ENCODE measurements at regions of chr10 and their contacts with region 1.

Region 1: DNA sequence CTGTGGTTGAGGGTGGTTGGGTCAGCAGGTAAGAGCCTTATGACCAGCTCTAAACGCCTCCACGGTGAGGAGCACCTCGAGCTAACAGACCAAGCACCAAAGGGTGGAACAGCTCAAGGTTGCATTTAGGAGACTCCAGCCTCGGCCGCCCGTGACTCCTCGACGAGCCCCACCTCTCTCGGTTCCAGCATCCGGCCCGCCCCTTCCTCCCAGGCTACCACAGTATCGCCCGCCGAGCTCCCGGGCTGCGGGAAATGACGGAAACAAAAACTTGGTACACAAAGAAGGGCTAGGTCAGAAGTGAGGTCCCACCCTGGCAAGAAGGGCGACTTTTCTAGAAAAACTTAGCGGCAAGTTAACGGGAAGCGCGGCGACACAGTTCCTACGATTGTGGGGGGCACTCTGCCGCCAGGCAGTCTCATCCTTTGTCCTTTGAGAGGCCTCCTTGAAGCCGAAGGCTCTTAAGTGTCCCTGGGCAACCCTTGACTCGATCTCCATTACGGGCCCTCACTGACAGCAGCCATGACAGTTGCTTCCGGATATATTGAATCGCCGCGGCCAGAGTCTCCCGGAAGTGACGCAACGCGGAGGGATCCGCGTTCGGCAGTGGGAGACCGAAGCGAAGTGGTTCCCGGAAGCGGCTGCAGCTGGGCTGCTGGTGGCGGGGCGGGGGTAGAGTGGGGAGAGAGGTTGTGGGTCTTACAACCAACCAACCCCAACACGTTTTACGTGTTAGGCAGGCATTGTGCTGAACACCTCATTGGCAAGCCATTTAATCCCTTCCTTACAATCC is 40.2 kb upstream of the ZNF518A start:
- DNase-seq: peak; percentile 95
- H3K4me3 Mint-ChIP-seq: peak overlapping the region; percentile 95
- H3K27ac Mint-ChIP-seq: peak overlapping the region; percentile 99
- H3K4me1 Mint-ChIP-seq: peaks cover 12% of the 10 kb centered on the region
- H3K27me3 Mint-ChIP-seq: peaks cover 15% of the 10 kb centered on the region

Region 2: DNA sequence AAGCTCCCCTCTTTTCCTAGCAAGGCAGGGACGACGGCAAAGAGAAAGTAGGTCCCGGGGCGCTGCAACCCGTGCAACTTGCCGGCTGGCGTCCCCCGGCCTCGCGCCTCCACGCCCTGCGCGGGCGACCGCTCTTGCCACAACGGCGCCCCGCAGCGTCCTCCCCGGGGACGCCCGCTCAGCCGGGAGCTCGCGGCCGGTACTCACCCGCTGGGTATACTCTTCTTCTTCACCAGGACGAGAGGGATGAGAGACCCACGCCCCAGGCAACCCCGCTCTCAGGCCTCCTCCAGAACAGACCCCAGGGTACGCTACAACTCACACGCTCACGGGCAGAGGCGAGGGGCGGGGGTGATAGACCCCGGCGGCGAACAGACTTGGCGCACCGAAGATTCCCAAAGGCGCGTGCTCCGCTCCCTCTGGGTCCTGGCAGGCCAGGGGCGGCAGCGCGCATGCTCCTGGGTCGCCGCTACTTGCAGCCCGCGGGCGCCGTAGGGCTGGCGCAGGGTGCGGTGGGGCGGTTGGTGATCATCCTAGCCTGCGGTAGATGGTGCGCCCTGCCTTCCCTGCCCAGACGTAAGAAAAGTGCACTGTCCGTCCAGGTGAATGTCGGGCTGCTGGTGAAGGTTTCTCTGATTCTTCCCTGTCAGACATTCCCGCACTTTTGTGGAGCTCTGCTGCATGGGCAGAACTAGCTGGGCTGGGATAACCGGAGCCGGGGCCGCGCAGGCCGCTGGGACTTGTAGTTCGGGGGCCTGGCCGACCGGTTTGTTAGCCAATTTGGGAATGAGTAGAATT is 182.2 kb before region 1 on chr10 and contains the start of gene CC2D2B:
- CTCF ChIA-PET with region 1: interaction called, 4 read pairs
- POLR2A ChIA-PET with region 1: no interaction called
- intact Hi-C with region 1: loop called (anchors 1 kb)
- DNase-seq: peak; percentile 75
- H3K4me3 Mint-ChIP-seq: peak within 1 kb of the TSS; percentile 92
- H3K27ac Mint-ChIP-seq: peak within 1 kb of the TSS; percentile 89
- H3K4me1 Mint-ChIP-seq: peaks cover 12% of the 10 kb centered on the region
- H3K27me3 Mint-ChIP-seq: peaks cover 2% of the 10 kb centered on the region
- total RNA-seq, gene CC2D2B: 0.15 TPM in 1 of 2 experiments, not detected in the other

Region 3: GRCh38 chr10:95963226-95963990 is 126.5 kb before region 1 on chr10:
- CTCF ChIA-PET with region 1: no interaction called
- POLR2A ChIA-PET with region 1: no interaction called
- intact Hi-C with region 1: no loop called
- DNase-seq: no peak
- H3K4me3 Mint-ChIP-seq: no peak overlapping the region
- H3K27ac Mint-ChIP-seq: peak overlapping the region; percentile 67
- H3K4me1 Mint-ChIP-seq: peaks cover 19% of the 10 kb centered on the region
- H3K27me3 Mint-ChIP-seq: no peaks in the 10 kb centered on the region

Region 4: DNA sequence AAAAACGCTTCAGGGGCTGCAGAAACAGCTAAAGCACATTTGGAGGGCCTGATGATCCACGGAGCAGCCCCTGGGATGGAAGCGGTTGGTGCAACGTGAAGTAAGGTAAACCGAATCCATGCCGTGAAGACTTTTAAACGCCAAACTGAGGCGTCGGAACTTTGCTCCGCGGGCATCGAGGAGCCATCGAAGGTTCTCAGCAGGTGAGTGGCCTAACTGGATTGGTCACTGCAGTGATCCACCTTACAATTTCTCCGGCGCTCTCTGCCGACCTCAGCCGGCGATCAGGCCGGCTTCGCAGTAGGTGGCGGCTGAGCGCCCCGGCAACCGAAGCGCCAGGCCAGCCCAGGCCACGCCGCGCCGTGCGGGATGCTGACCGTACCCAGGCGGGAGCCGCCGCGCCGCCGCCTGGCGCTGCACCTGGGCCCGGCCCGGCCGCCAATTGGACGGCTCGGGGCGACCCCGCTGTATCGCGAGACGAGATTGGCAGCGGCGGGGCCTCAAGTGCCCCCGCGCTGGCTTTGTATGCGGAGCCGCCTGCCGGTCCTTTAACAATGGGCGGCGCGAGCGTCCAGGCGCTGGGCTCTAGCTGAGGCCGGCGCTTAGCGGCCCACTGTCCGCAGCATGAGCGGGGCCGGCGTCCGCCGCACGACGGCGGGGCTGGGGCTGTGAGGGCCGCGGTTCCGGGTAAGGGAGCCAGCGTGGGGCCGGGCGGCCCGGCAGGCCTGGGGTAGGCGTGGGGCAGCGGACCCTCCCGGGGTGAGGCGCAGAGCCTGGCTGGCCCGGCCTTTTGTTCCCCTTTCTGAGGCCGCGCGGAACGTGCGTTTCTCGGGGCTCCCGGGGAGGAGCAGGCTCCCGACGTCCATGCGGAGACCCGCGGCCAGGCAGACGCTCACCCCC is 46.6 kb before region 1 on chr10 and contains the start of gene CCNJ:
- CTCF ChIA-PET with region 1: interaction called, 3 read pairs
- POLR2A ChIA-PET with region 1: interaction called, 5 read pairs
- intact Hi-C with region 1: loop called (anchors 1 kb)
- DNase-seq: peak; percentile 88
- H3K4me3 Mint-ChIP-seq: peak within 1 kb of the TSS; percentile 90
- H3K27ac Mint-ChIP-seq: peak within 1 kb of the TSS; percentile 59
- H3K4me1 Mint-ChIP-seq: peaks cover 42% of the 10 kb centered on the region
- H3K27me3 Mint-ChIP-seq: peaks cover 5% of the 10 kb centered on the region
- total RNA-seq, gene CCNJ: 4.3 to 4.4 TPM

Region 5: DNA sequence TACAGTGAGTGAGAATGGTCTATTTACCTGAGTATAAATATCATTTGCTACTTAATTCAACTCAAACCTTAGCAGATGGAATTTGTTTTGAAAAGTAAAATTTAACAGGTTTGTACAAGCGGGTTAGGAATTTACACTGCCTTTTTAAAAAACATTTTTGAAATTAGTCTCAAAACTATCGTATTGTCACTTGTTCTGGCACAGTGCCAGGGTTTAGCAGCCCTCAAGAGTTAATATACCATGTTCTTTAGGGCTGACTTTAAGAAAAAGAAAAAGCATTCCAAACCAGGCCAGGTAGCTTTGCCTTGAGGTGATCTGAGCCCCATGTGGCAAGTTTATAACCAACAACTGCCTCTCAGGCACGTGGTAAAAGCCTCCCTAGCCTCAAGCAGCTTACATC is 28.6 kb before region 1 on chr10:
- CTCF ChIA-PET with region 1: no interaction called
- POLR2A ChIA-PET with region 1: no interaction called
- intact Hi-C with region 1: loop called (anchors 1 kb)
- DNase-seq: no peak
- H3K4me3 Mint-ChIP-seq: no peak overlapping the region
- H3K27ac Mint-ChIP-seq: no peak overlapping the region
- H3K4me1 Mint-ChIP-seq: peaks cover 16% of the 10 kb centered on the region
- H3K27me3 Mint-ChIP-seq: no peaks in the 10 kb centered on the region

Region 6: GRCh38 chr10:96073722-96074121 is 16.1 kb before region 1 on chr10:
- CTCF ChIA-PET with region 1: no interaction called
- POLR2A ChIA-PET with region 1: interaction called, 7 read pairs
- intact Hi-C with region 1: loop called (anchors 1 kb)
- DNase-seq: no peak
- H3K4me3 Mint-ChIP-seq: no peak overlapping the region
- H3K27ac Mint-ChIP-seq: peak overlapping the region; percentile 1
- H3K4me1 Mint-ChIP-seq: peaks cover 20% of the 10 kb centered on the region
- H3K27me3 Mint-ChIP-seq: no peaks in the 10 kb centered on the region

Region 7: DNA sequence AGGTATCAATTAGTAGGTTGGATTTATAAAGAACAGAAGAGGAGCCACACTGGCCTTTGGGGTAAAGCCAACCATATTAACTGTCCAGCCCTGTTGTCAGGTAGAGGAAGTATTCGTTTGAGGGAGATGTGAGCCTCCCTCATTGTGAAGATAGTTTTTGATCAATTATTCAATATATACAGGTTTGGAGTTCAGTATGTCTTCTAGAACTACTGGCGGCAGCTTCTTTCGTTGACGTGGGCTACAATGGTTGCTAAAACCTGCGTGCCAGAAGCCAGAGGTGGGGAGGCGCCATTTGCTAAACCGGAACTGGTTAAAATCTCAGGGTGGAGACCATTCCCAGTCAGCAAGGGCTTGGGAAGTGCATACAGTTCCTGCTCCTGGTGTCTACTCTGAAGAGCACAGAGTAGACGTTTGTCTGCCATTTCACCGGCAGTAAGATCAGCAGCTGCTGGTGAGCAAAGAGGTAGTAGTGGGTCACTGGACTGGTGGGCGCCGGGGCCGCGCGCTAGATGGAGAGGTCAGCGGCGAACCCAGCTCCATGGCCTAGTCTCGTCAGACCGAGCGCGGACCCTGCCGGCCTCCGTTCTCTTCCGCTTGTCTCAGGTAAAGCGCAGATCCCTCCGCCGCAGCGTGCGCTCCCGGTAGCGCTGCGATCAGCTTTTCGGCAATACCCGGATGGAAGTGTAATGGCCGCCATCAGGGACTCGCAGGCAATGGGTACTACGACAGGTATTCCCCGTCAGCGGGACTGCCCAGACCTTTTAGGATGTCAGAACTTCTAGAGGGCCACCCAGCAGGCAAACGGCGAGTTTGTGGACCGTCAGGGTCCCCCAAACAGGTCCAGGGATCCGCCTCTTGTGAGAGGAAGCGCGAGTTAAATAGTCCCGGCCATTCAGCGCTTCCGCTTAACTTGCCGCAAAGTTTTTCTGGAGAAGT is 39.8 kb after region 1 on chr10 and contains the start of gene ZNF518A:
- CTCF ChIA-PET with region 1: interaction called, 17 read pairs
- POLR2A ChIA-PET with region 1: interaction called, 72 read pairs
- intact Hi-C with region 1: loop called (anchors 1 kb)
- DNase-seq: peak; percentile 91
- H3K4me3 Mint-ChIP-seq: peak within 1 kb of the TSS; percentile 92
- H3K27ac Mint-ChIP-seq: peak within 1 kb of the TSS; percentile 99
- H3K4me1 Mint-ChIP-seq: peaks cover 20% of the 10 kb centered on the region
- H3K27me3 Mint-ChIP-seq: peaks cover 29% of the 10 kb centered on the region
- total RNA-seq, gene ZNF518A: 9.6 to 13.3 TPM

Measured in activated CD4-positive, alpha-beta memory T cell treated with anti-CD3 and anti-CD28 coated beads for 36 hours (primary cell).